ENCODE measurements at regions of chr19 and their contacts with region 1.

Region 1: DNA sequence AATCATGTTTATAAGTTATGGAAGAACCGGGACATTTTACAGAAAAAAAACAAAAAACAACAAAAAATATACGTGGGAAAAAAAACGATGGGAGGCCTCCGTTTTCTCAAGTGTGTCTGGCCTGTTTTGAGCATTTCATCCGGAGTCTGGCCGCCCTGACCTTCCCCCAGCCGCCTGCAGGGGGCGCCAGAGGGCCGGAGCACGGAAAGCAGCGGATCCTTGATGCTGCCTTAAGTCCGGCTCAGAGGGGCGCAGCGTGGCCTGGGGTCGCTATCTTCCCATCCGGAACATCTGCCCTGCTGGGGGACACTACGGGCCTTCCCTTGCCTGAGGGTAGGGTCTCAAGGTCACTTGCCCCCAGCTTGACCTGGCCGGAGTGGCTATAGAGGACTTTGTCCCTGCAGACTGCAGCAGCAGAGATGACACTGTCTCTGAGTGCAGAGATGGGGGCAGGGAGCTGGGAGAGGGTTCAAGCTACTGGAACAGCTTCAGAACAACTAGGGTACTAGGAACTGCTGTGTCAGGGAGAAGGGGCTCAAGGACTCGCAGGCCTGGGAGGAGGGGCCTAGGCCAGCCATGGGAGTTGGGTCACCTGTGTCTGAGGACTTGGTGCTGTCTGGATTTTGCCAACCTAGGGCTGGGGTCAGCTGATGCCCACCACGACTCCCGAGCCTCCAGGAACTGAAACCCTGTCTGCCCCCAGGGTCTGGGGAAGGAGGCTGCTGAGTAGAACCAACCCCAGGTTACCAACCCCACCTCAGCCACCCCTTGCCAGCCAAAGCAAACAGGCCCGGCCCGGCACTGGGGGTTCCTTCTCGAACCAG is 1.8 kb upstream of the APOE start:
- DNase-seq: peak; percentile 78
- ATAC-seq: peak; percentile 68
- H3K4me3 Mint-ChIP-seq: no peak overlapping the region
- H3K27ac Mint-ChIP-seq: no peak overlapping the region
- H3K4me1 Mint-ChIP-seq: peaks cover 18% of the 10 kb centered on the region
- H3K27me3 Mint-ChIP-seq: peaks cover 15% of the 10 kb centered on the region
- CTCF ChIP-seq: peak; percentile 96

Region 2: GRCh38 chr19:45340232-45340898 is 436.6 kb after region 1 on chr19 and contains the start of gene KLC3:
- CTCF ChIA-PET with region 1: no interaction called
- POLR2A ChIA-PET with region 1: no interaction called
- intact Hi-C with region 1: loop called (anchors 1 kb)
- DNase-seq: peak; percentile 44
- ATAC-seq: peak; percentile 60
- H3K4me3 Mint-ChIP-seq: peak within 1 kb of the TSS; percentile 53
- H3K27ac Mint-ChIP-seq: no peak within 1 kb of the TSS
- H3K4me1 Mint-ChIP-seq: peaks cover 7% of the 10 kb centered on the region
- H3K27me3 Mint-ChIP-seq: peaks cover 17% of the 10 kb centered on the region
- CTCF ChIP-seq: no peak
- total RNA-seq, gene KLC3: not detected in 2 replicates